ENCODE measurements at regions of chr6 and their contacts with region 1.

Region 1: DNA sequence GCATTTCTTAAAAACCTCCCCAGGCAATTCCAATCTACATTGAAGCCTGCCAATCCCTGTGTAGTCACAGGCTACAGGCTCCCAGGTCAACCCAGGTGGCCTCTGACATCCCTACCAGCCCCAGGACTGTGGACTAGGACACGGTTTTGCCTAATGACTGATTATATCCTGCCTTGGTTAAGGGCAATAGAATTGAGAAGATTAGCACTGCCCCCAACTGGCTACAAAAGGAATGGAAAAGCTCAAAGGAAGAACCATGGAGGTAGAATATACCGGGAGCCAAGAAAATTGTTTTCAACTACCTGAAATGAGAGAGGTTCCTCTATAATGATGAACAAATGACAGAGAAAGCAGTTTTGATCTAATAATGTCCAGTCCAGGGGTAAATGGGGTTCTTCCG is 421.1 kb upstream of the AGPAT4 start:
- DNase-seq: no peak
- H3K4me3 ChIP-seq: no peak overlapping the region
- H3K27ac ChIP-seq: no peak overlapping the region
- H3K4me1 ChIP-seq: no peaks in the 10 kb centered on the region
- H3K27me3 ChIP-seq: no peaks in the 10 kb centered on the region
- CTCF ChIP-seq: peak in 2 of 3 experiments; percentile 62 to 63; a peak in 3 of 4 replicates
- EP300 ChIP-seq: no peak
- POLR2A ChIP-seq: no peak
- RAD21 ChIP-seq: peak; percentile 79 to 83

Region 2: GRCh38 chr6:161557333-161558107 is 137.5 kb before region 1 on chr6:
- CTCF ChIA-PET with region 1: interaction called, 13 read pairs
- POLR2A ChIA-PET with region 1: no interaction called
- DNase-seq: no peak
- H3K4me3 ChIP-seq: no peak overlapping the region
- H3K27ac ChIP-seq: no peak overlapping the region
- H3K4me1 ChIP-seq: no peaks in the 10 kb centered on the region
- H3K27me3 ChIP-seq: no peaks in the 10 kb centered on the region
- CTCF ChIP-seq: peak in 2 of 3 experiments; percentile 47 to 55; a peak in 2 of 4 replicates
- EP300 ChIP-seq: no peak
- POLR2A ChIP-seq: no peak
- RAD21 ChIP-seq: peak; percentile 73 to 79

Measured in H1 (cell line).